ENCODE measurements at regions of chr19 and their contacts with region 1.

Region 1: GRCh38 chr19:30046522-30046921 is 104.5 kb downstream of the URI1 start:
- DNase-seq: no peak
- ATAC-seq: peak; percentile 87
- H3K4me3 Mint-ChIP-seq: no peak overlapping the region
- H3K27ac Mint-ChIP-seq: no peak overlapping the region
- H3K4me1 Mint-ChIP-seq: peaks cover 18% of the 10 kb centered on the region
- H3K27me3 Mint-ChIP-seq: no peaks in the 10 kb centered on the region
- CTCF ChIP-seq: no peak

Region 2: GRCh38 chr19:29966588-29967249 is 79.8 kb before region 1 on chr19:
- CTCF ChIA-PET with region 1: no interaction called
- POLR2A ChIA-PET with region 1: no interaction called
- intact Hi-C with region 1: no loop called
- DNase-seq: no peak
- ATAC-seq: no peak
- H3K4me3 Mint-ChIP-seq: no peak overlapping the region
- H3K27ac Mint-ChIP-seq: no peak overlapping the region
- H3K4me1 Mint-ChIP-seq: peaks cover 70% of the 10 kb centered on the region
- H3K27me3 Mint-ChIP-seq: no peaks in the 10 kb centered on the region
- CTCF ChIP-seq: no peak

Region 3: GRCh38 chr19:30017172-30017571 is 29.4 kb before region 1 on chr19:
- CTCF ChIA-PET with region 1: no interaction called
- POLR2A ChIA-PET with region 1: no interaction called
- intact Hi-C with region 1: loop called (anchors 1 kb)
- DNase-seq: no peak
- ATAC-seq: peak; percentile 76
- H3K4me3 Mint-ChIP-seq: no peak overlapping the region
- H3K27ac Mint-ChIP-seq: no peak overlapping the region
- H3K4me1 Mint-ChIP-seq: peaks cover 13% of the 10 kb centered on the region
- H3K27me3 Mint-ChIP-seq: no peaks in the 10 kb centered on the region
- CTCF ChIP-seq: no peak

Region 4: DNA sequence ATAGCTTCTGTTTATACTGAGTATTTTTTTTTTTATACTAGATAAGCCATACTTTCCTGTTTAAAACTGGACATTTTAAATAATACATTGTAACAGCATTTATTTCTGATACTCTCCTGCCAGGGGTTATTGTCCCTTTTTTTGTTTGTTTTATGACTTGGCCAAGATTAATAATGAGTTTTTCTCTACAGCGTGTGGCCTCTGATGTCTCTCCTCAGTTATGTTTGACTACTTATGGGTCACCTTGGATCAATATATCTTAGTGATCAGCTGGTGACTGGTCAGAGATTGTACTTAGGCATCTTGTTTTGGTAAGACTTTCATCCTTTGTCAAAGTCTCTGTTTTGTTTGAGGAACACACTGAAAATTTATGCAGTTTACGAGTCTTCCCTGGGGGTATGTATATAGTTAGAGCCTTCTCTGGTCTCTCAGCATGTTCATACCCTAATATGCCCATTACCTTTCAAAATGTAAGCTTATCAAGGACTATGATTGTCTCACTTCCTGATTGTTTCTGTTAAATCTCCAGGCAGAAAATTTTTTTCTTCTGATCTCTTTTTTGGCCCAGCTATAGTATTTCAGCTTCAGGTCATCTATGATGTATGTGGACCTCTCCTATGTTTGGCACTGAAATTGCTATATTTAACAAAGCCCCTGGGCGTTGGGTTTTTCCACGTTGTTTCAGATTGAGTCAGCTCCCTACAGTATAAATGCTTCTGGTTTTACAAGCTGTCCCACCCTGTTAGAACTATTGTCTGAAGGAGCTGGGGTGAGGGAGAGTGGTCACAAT is 16.6 kb before region 1 on chr19:
- CTCF ChIA-PET with region 1: no interaction called
- POLR2A ChIA-PET with region 1: no interaction called
- intact Hi-C with region 1: loop called (anchors 2 kb)
- DNase-seq: no peak
- ATAC-seq: peak; percentile 83
- H3K4me3 Mint-ChIP-seq: peak overlapping the region; percentile 12
- H3K27ac Mint-ChIP-seq: peak overlapping the region; percentile 42
- H3K4me1 Mint-ChIP-seq: peaks cover 16% of the 10 kb centered on the region
- H3K27me3 Mint-ChIP-seq: no peaks in the 10 kb centered on the region
- CTCF ChIP-seq: no peak

Region 5: DNA sequence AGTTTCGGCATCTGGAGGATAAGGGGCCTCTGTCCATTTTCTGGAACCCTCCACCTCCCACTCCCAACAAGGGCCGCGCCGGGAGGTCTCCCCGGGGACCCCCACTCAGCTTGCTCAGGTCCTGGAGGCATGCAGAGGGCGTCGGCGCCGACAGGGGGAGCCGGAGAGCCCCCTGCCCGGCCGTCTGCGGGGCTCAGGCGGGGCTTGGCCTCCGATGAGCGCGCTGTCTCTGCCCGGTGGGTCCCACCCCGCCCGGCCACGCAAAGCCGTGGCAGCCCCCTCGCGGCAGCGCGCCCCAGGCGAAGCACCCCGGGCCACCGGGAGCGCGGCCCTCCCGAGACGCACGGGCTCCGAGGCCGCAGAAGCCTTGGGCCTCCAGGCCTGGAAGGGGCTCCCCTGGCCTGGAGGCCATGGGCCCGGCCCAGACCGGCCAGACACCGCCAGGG is 175.9 kb after region 1 on chr19:
- CTCF ChIA-PET with region 1: no interaction called
- POLR2A ChIA-PET with region 1: no interaction called
- intact Hi-C with region 1: loop called (anchors 5 kb)
- DNase-seq: no peak
- ATAC-seq: no peak
- H3K4me3 Mint-ChIP-seq: no peak overlapping the region
- H3K27ac Mint-ChIP-seq: no peak overlapping the region
- H3K4me1 Mint-ChIP-seq: peaks cover 27% of the 10 kb centered on the region
- H3K27me3 Mint-ChIP-seq: peaks cover 53% of the 10 kb centered on the region
- CTCF ChIP-seq: no peak

Region 6: DNA sequence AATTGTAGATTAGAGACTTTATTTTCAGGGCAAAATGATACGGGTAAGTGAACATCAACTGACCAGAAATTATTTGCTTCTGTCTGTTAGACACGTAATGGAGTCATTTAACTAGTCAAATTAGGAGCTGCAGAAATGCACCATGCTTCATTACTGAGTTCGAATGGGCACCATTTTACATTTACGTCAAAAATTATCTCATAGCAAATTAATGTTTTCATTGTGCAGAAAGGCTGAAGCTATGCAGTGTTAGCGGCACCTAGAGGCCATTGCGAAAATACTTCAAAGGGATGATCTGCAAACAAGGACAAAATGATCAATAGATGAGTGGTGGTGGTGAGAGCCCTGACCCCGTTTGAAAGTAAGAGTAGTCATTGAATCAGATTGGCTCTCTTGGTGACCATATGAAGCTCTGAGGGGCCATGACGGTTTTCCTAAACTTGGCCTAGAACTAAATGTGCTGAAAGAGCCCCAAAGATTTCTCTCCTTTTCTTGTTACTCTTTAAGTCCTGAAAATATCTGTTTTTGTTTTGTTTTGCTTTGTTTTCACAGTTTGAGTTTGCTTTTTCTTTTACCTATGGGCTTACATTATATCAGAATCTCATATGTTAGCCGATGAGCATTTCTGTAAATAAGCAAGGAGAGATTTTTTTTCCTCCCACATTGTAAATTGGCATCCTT is 603.6 kb after region 1 on chr19:
- CTCF ChIA-PET with region 1: no interaction called
- POLR2A ChIA-PET with region 1: no interaction called
- intact Hi-C with region 1: loop called (anchors 1 kb)
- DNase-seq: no peak
- ATAC-seq: no peak
- H3K4me3 Mint-ChIP-seq: no peak overlapping the region
- H3K27ac Mint-ChIP-seq: no peak overlapping the region
- H3K4me1 Mint-ChIP-seq: no peaks in the 10 kb centered on the region
- H3K27me3 Mint-ChIP-seq: peaks cover 3% of the 10 kb centered on the region
- CTCF ChIP-seq: peak; percentile 5